Activated CD4-positive, alpha-beta T cell treated with anti-CD3 and anti-CD28 coated beads for 36 hours (primary cell): ENCODE measurements at regions of chr14 and their contacts with region 1.

Region 1: GRCh38 chr14:35808076-35808652 is 931 bp downstream of the RALGAPA1 start:
- DNase-seq: peak; percentile 54
- ATAC-seq: no peak
- H3K4me3 Mint-ChIP-seq: peak overlapping the region; percentile 95
- H3K27ac Mint-ChIP-seq: peak overlapping the region; percentile 97
- H3K4me1 Mint-ChIP-seq: peaks cover 24% of the 10 kb centered on the region
- H3K27me3 Mint-ChIP-seq: no peaks in the 10 kb centered on the region

Region 2: DNA sequence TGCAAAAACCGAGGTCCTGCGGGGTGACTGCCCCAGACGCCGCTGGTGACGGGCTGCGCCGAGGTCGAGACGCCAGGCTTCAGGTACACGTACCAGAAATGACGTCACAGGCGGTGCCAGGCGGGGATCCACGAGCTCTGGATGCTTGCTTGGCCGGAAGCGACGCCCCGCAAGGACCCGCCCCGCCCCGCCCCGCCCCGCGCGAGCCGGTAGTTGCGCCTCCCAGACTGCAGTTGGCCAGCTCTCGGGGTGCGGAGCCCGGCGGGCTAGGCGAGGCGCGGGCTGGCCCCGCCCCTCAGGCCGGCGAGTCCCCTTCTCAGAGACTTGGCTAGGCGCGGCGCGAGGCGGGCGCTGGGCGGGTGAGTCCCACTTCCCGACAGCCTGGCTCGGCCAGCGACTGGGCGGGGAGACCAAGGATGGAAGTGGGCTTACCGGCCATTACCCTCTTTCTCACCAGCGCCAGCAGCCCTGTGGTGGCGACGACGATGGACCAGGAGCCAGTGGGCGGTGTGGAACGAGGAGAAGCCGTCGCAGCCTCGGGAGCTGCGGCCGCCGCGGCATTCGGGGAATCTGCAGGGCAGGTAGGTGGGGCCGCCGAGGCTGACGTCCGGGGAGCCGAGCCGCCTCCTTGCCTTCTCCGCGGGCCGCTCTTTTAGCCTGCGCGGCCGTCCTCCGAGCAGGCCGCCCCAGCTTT is 762.0 kb before region 1 on chr14 and contains the start of gene FAM177A1:
- CTCF ChIA-PET with region 1: no interaction called
- POLR2A ChIA-PET with region 1: no interaction called
- intact Hi-C with region 1: loop called (anchors 1 to 5 kb)
- DNase-seq: peak; percentile 100
- ATAC-seq: peak; percentile 94
- H3K4me3 Mint-ChIP-seq: peak within 1 kb of the TSS; percentile 95
- H3K27ac Mint-ChIP-seq: peak within 1 kb of the TSS; percentile 99
- H3K4me1 Mint-ChIP-seq: peaks cover 23% of the 10 kb centered on the region
- H3K27me3 Mint-ChIP-seq: no peaks in the 10 kb centered on the region
- total RNA-seq, gene FAM177A1: 35.4 to 37.2 TPM

Region 3: GRCh38 chr14:35741345-35742031 is 66.7 kb before region 1 on chr14:
- CTCF ChIA-PET with region 1: interaction called, 3 read pairs
- POLR2A ChIA-PET with region 1: no interaction called
- intact Hi-C with region 1: loop called in 1 of 2 experiments (anchors 2 kb)
- DNase-seq: no peak
- ATAC-seq: peak; percentile 68
- H3K4me3 Mint-ChIP-seq: no peak overlapping the region
- H3K27ac Mint-ChIP-seq: peak overlapping the region; percentile 37
- H3K4me1 Mint-ChIP-seq: peaks cover 13% of the 10 kb centered on the region
- H3K27me3 Mint-ChIP-seq: no peaks in the 10 kb centered on the region

Region 4: GRCh38 chr14:35766700-35767082 is 41.5 kb before region 1 on chr14:
- CTCF ChIA-PET with region 1: no interaction called
- POLR2A ChIA-PET with region 1: no interaction called
- intact Hi-C with region 1: loop called in 1 of 2 experiments (anchors 5 kb)
- DNase-seq: peak; percentile 40
- ATAC-seq: peak; percentile 92
- H3K4me3 Mint-ChIP-seq: no peak overlapping the region
- H3K27ac Mint-ChIP-seq: no peak overlapping the region
- H3K4me1 Mint-ChIP-seq: peaks cover 12% of the 10 kb centered on the region
- H3K27me3 Mint-ChIP-seq: no peaks in the 10 kb centered on the region

Region 5: GRCh38 chr14:35867273-35867629 is 59.1 kb after region 1 on chr14:
- CTCF ChIA-PET with region 1: no interaction called
- POLR2A ChIA-PET with region 1: no interaction called
- intact Hi-C with region 1: no loop called
- DNase-seq: no peak
- ATAC-seq: no peak
- H3K4me3 Mint-ChIP-seq: no peak overlapping the region
- H3K27ac Mint-ChIP-seq: no peak overlapping the region
- H3K4me1 Mint-ChIP-seq: no peaks in the 10 kb centered on the region
- H3K27me3 Mint-ChIP-seq: no peaks in the 10 kb centered on the region

Region 6: DNA sequence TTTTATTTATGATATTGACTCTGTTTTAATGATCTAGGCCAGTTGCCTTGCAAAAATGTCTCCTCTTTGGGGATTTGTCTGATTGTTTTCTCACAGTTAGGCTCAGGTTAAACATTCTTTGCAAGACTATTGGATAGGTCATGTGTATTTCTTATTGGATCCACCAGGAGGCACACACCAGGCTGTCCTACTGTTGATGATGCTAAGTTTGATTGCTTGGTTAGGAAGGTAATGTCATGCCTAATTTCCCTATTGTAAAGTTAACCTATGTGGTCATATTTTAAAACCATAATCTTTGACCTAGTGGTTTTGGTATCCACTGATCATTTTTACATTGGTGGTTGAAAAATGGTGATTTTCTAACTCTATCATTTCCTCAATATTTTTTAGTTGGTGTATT is 155.0 kb after region 1 on chr14:
- CTCF ChIA-PET with region 1: no interaction called
- POLR2A ChIA-PET with region 1: no interaction called
- intact Hi-C with region 1: no loop called
- DNase-seq: no peak
- ATAC-seq: no peak
- H3K4me3 Mint-ChIP-seq: no peak overlapping the region
- H3K27ac Mint-ChIP-seq: no peak overlapping the region
- H3K4me1 Mint-ChIP-seq: no peaks in the 10 kb centered on the region
- H3K27me3 Mint-ChIP-seq: peaks cover 2% of the 10 kb centered on the region

Region 7: DNA sequence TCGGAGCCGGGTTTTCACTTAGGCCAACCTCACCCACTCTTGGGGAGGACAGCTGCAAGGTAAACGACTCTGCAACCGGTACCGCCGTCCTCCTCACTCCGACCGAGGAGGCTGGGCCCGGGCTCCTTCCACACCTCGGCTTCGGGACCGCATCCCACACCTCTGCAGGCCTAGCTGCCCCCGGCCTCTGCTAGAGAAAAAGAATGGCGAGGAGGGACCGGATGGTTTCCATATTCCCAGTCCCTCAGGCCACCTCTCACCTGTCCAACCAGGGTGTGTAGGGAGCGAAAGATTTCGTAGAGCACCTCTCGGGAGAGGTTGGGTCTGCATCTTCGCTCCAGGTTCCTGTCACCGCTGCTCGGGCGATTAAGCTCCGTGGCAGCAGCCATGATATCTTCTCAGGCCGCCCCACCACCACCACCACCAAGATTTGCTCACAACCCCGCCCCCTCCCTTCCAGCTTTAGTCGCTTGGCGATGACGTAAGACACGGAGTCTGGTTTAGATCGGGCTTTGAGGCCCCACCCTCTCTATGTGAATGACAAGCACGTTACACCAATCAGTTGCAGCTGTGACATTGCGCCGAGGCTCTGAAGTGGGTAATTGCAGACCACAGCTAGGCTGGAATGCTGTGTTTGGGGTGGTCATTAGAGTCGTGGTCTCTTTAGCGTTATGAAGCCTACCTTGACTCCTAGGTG is 512.2 kb after region 1 on chr14 and contains the start of gene MBIP:
- CTCF ChIA-PET with region 1: no interaction called
- POLR2A ChIA-PET with region 1: no interaction called
- intact Hi-C with region 1: loop called in 1 of 2 experiments (anchors 5 kb)
- DNase-seq: peak; percentile 95
- ATAC-seq: peak; percentile 95
- H3K4me3 Mint-ChIP-seq: peak within 1 kb of the TSS; percentile 85
- H3K27ac Mint-ChIP-seq: peak within 1 kb of the TSS; percentile 94
- H3K4me1 Mint-ChIP-seq: peaks cover 29% of the 10 kb centered on the region
- H3K27me3 Mint-ChIP-seq: peaks cover 10% of the 10 kb centered on the region
- total RNA-seq, gene MBIP: 32.8 to 33.0 TPM